Naive thymus-derived CD4-positive, alpha-beta T cell (primary cell): ENCODE measurements at regions of chr10 and their contacts with region 1.

Region 1: GRCh38 chr10:17409170-17409733 is 45.1 kb downstream of the ST8SIA6 start:
- DNase-seq: peak in 6 of 9 donors; percentile 25 to 56 (median 54)
- ATAC-seq: peak; percentile 79
- H3K4me3 ChIP-seq: no peak overlapping the region
- H3K4me3 Mint-ChIP-seq: peak overlapping the region in 9 of 10 donors; percentile 4 to 69 (median 45)
- H3K27ac ChIP-seq: no peak overlapping the region
- H3K27ac Mint-ChIP-seq: peak overlapping the region; percentile 50 to 87 (median 78)
- H3K4me1 ChIP-seq: peaks cover 0 to 14% of the 10 kb centered on the region in 2 donors
- H3K4me1 Mint-ChIP-seq: peaks cover 14 to 32% (median 29%) of the 10 kb centered on the region in 7 donors
- H3K27me3 ChIP-seq: no peaks in the 10 kb centered on the region
- H3K27me3 Mint-ChIP-seq: peaks cover 0 to 25% (median 0%) of the 10 kb centered on the region in 5 donors

Region 2: GRCh38 chr10:16828114-16828568 is 581.1 kb before region 1 on chr10:
- CTCF ChIA-PET with region 1: no interaction called
- POLR2A ChIA-PET with region 1: no interaction called
- intact Hi-C with region 1: no loop called
- DNase-seq: peak; percentile 22 to 78 (median 69)
- ATAC-seq: peak; percentile 96
- H3K4me3 ChIP-seq: no peak overlapping the region
- H3K4me3 Mint-ChIP-seq: no peak overlapping the region
- H3K27ac ChIP-seq: no peak overlapping the region
- H3K27ac Mint-ChIP-seq: peak overlapping the region in 3 of 9 donors; percentile 63 to 84 (median 82)
- H3K4me1 ChIP-seq: no peaks in the 10 kb centered on the region
- H3K4me1 Mint-ChIP-seq: peaks cover 0 to 12% (median 8%) of the 10 kb centered on the region in 7 donors
- H3K27me3 ChIP-seq: no peaks in the 10 kb centered on the region
- H3K27me3 Mint-ChIP-seq: peaks cover 0 to 9% (median 0%) of the 10 kb centered on the region in 5 donors

Region 3: GRCh38 chr10:17423632-17424186 is 14.5 kb after region 1 on chr10:
- CTCF ChIA-PET with region 1: interaction called, 178 read pairs
- POLR2A ChIA-PET with region 1: interaction called, 200 read pairs
- intact Hi-C with region 1: no loop called
- DNase-seq: peak in 3 of 9 donors; percentile 13 to 29 (median 25)
- ATAC-seq: peak; percentile 23
- H3K4me3 ChIP-seq: no peak overlapping the region
- H3K4me3 Mint-ChIP-seq: peak overlapping the region; percentile 7 to 72 (median 50)
- H3K27ac ChIP-seq: peak overlapping the region; percentile 24
- H3K27ac Mint-ChIP-seq: peak overlapping the region; percentile 12 to 96 (median 91)
- H3K4me1 ChIP-seq: peaks cover 28 to 66% of the 10 kb centered on the region in 2 donors
- H3K4me1 Mint-ChIP-seq: peaks cover 49 to 85% (median 83%) of the 10 kb centered on the region in 7 donors
- H3K27me3 ChIP-seq: no peaks in the 10 kb centered on the region
- H3K27me3 Mint-ChIP-seq: no peaks in the 10 kb centered on the region

Region 4: DNA sequence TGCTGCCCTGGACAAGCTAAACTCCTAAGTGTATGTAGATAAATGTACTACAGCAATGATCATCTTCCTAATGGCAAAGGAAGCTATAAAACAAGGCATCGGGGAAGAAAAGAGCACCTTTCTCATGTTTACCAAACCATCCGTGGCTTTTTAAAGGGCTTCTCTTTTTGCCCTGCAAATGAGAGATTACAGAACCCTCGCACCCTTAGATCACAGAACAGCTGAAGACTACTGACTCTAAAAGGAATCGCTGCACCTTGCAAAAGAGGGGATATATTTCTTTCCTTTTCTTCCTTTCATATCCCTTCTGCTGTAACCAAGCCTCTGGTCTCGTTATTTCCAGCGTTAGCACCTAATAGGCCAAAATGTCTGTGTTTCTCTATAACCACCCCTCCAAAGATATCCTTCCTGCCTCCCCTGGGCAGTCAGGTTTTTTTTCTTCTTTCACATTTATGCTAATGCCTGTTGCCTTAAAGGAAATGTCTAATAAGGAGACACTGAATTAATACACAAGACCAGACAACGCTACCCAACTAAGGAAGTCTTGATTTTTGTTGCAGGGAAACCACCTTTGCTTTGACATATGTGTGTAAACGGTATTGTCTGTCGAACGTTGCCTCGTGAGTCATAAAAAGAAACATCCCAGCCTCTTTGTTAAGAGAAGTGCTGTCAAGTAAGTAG is 34.6 kb after region 1 on chr10:
- CTCF ChIA-PET with region 1: interaction called, 4 read pairs
- POLR2A ChIA-PET with region 1: no interaction called
- intact Hi-C with region 1: loop called (anchors 1 to 5 kb)
- DNase-seq: peak in 2 of 9 donors; percentile 14 to 27
- ATAC-seq: peak; percentile 88
- H3K4me3 ChIP-seq: peak overlapping the region; percentile 16
- H3K4me3 Mint-ChIP-seq: peak overlapping the region in 6 of 10 donors; percentile 26 to 58 (median 43)
- H3K27ac ChIP-seq: no peak overlapping the region
- H3K27ac Mint-ChIP-seq: peak overlapping the region in 4 of 9 donors; percentile 1 to 63 (median 8)
- H3K4me1 ChIP-seq: peaks cover 9 to 14% of the 10 kb centered on the region in 2 donors
- H3K4me1 Mint-ChIP-seq: peaks cover 9 to 14% (median 11%) of the 10 kb centered on the region in 7 donors
- H3K27me3 ChIP-seq: no peaks in the 10 kb centered on the region
- H3K27me3 Mint-ChIP-seq: peaks cover 5 to 34% (median 9%) of the 10 kb centered on the region in 5 donors

Region 5: GRCh38 chr10:17454161-17455014 is 45.1 kb after region 1 on chr10 and contains the start of gene ST8SIA6:
- CTCF ChIA-PET with region 1: no interaction called
- POLR2A ChIA-PET with region 1: no interaction called
- intact Hi-C with region 1: loop called in 1 of 2 experiments (anchors 1 kb)
- DNase-seq: peak; percentile 26 to 64 (median 52)
- ATAC-seq: peak; percentile 80
- H3K4me3 ChIP-seq: peak within 1 kb of the TSS; percentile 64
- H3K4me3 Mint-ChIP-seq: peak within 1 kb of the TSS; percentile 82 to 92 (median 89)
- H3K27ac ChIP-seq: peak within 1 kb of the TSS; percentile 29
- H3K27ac Mint-ChIP-seq: peak within 1 kb of the TSS in 5 of 9 donors; percentile 18 to 87 (median 74)
- H3K4me1 ChIP-seq: peaks cover 4 to 10% of the 10 kb centered on the region in 2 donors
- H3K4me1 Mint-ChIP-seq: peaks cover 5 to 23% (median 20%) of the 10 kb centered on the region in 7 donors
- H3K27me3 ChIP-seq: no peaks in the 10 kb centered on the region
- H3K27me3 Mint-ChIP-seq: peaks cover 0 to 66% (median 5%) of the 10 kb centered on the region in 5 donors
- total RNA-seq, gene ST8SIA6: 0.43 to 2.5 (median 0.60) TPM

Region 6: GRCh38 chr10:17599089-17599488 is 189.8 kb after region 1 on chr10:
- CTCF ChIA-PET with region 1: interaction called, 4 read pairs
- POLR2A ChIA-PET with region 1: no interaction called
- intact Hi-C with region 1: loop called in 1 of 2 experiments (anchors 1 kb)
- DNase-seq: no peak
- ATAC-seq: peak; percentile 57
- H3K4me3 ChIP-seq: no peak overlapping the region
- H3K4me3 Mint-ChIP-seq: no peak overlapping the region
- H3K27ac ChIP-seq: no peak overlapping the region
- H3K27ac Mint-ChIP-seq: no peak overlapping the region
- H3K4me1 ChIP-seq: no peaks in the 10 kb centered on the region
- H3K4me1 Mint-ChIP-seq: peaks cover 0 to 2% (median 0%) of the 10 kb centered on the region in 7 donors
- H3K27me3 ChIP-seq: no peaks in the 10 kb centered on the region
- H3K27me3 Mint-ChIP-seq: peaks cover 0 to 6% (median 0%) of the 10 kb centered on the region in 5 donors

Region 7: GRCh38 chr10:17607603-17608332 is 198.5 kb after region 1 on chr10:
- CTCF ChIA-PET with region 1: interaction called, 3 read pairs
- POLR2A ChIA-PET with region 1: no interaction called
- intact Hi-C with region 1: loop called in 1 of 2 experiments (anchors 2 kb)
- DNase-seq: peak in 7 of 9 donors; percentile 16 to 62 (median 55)
- ATAC-seq: peak; percentile 92
- H3K4me3 ChIP-seq: no peak overlapping the region
- H3K4me3 Mint-ChIP-seq: no peak overlapping the region
- H3K27ac ChIP-seq: no peak overlapping the region
- H3K27ac Mint-ChIP-seq: no peak overlapping the region
- H3K4me1 ChIP-seq: no peaks in the 10 kb centered on the region
- H3K4me1 Mint-ChIP-seq: peaks cover 0 to 3% (median 0%) of the 10 kb centered on the region in 7 donors
- H3K27me3 ChIP-seq: no peaks in the 10 kb centered on the region
- H3K27me3 Mint-ChIP-seq: peaks cover 0 to 4% (median 0%) of the 10 kb centered on the region in 5 donors

Region 8: GRCh38 chr10:17742918-17743317 is 333.7 kb after region 1 on chr10:
- CTCF ChIA-PET with region 1: no interaction called
- POLR2A ChIA-PET with region 1: no interaction called
- intact Hi-C with region 1: loop called (anchors 1 kb)
- DNase-seq: peak; percentile 19 to 66 (median 56)
- ATAC-seq: peak; percentile 75
- H3K4me3 ChIP-seq: no peak overlapping the region
- H3K4me3 Mint-ChIP-seq: no peak overlapping the region
- H3K27ac ChIP-seq: no peak overlapping the region
- H3K27ac Mint-ChIP-seq: no peak overlapping the region
- H3K4me1 ChIP-seq: no peaks in the 10 kb centered on the region
- H3K4me1 Mint-ChIP-seq: peaks cover 3 to 15% (median 5%) of the 10 kb centered on the region in 7 donors
- H3K27me3 ChIP-seq: no peaks in the 10 kb centered on the region
- H3K27me3 Mint-ChIP-seq: no peaks in the 10 kb centered on the region